Activated CD4-positive, alpha-beta T cell treated with anti-CD3 and anti-CD28 coated beads for 36 hours (primary cell): ENCODE measurements at regions of chr3 and their contacts with region 1.

Region 1: GRCh38 chr3:152471814-152472671 is 203.3 kb downstream of the MBNL1 start:
- DNase-seq: peak; percentile 83
- ATAC-seq: peak; percentile 80
- H3K4me3 Mint-ChIP-seq: peak overlapping the region; percentile 39
- H3K27ac Mint-ChIP-seq: peak overlapping the region; percentile 55
- H3K4me1 Mint-ChIP-seq: peaks cover 10% of the 10 kb centered on the region
- H3K27me3 Mint-ChIP-seq: no peaks in the 10 kb centered on the region

Region 2: DNA sequence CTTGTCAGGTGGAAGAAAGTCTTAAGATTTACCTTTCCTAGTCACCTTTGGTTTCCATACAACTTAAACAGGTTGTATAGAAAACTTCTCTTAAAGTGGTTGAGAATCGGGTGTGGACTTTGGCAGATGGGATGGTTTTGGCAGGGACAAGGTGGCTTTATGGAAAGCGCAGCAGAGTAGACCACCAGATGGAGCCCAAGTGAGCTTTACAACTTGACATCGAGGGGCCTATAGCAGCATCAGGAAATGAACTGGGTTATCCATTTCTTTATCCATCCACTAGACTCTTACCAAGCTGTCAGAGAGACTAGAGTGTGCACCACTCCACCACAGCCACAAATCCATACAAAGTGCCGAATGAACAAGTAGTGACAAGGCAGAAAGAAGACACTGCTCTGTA is 288.6 kb before region 1 on chr3:
- CTCF ChIA-PET with region 1: interaction called, 15 read pairs
- POLR2A ChIA-PET with region 1: interaction called, 3 read pairs
- intact Hi-C with region 1: loop called (anchors 1 to 2 kb)
- DNase-seq: peak; percentile 72
- ATAC-seq: peak; percentile 87
- H3K4me3 Mint-ChIP-seq: peak overlapping the region; percentile 6
- H3K27ac Mint-ChIP-seq: peak overlapping the region; percentile 71
- H3K4me1 Mint-ChIP-seq: peaks cover 67% of the 10 kb centered on the region
- H3K27me3 Mint-ChIP-seq: no peaks in the 10 kb centered on the region

Region 3: GRCh38 chr3:152505926-152506325 is 33.9 kb after region 1 on chr3:
- CTCF ChIA-PET with region 1: interaction called, 10 read pairs
- POLR2A ChIA-PET with region 1: no interaction called
- intact Hi-C with region 1: no loop called
- DNase-seq: peak; percentile 62
- ATAC-seq: peak; percentile 96
- H3K4me3 Mint-ChIP-seq: no peak overlapping the region
- H3K27ac Mint-ChIP-seq: peak overlapping the region; percentile 11
- H3K4me1 Mint-ChIP-seq: peaks cover 6% of the 10 kb centered on the region
- H3K27me3 Mint-ChIP-seq: no peaks in the 10 kb centered on the region

Region 4: DNA sequence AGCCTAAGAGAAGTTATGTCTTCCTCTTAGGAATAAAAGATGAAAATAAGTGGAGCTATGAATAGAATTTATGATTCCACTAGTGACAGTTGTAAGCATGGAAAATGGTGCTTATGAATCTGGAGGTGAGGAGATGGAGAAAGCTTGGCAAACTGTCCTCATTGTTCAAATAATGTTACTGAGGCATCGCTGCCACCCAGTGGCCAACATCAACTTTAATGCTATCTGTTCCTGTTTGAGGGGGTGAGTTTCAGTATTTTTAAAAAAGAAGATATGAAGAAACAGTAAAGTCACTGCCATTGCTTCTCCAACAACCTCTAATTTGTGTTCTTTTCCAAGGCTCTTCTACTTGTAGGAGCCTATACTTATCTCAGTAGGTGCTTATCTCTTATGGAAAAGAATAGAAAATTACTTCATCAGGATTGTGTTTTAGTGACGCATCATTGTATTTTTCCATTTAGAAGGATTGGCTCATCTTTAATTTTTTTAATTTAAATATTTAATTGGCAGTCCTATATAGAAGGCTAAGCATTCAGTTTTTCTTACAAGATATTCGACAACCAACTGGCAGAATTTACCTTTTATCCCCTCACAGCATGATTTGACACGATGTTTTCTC is 102.5 kb after region 1 on chr3:
- CTCF ChIA-PET with region 1: interaction called, 15 read pairs
- POLR2A ChIA-PET with region 1: no interaction called
- intact Hi-C with region 1: loop called (anchors 1 to 5 kb)
- DNase-seq: peak; percentile 65
- ATAC-seq: no peak
- H3K4me3 Mint-ChIP-seq: no peak overlapping the region
- H3K27ac Mint-ChIP-seq: no peak overlapping the region
- H3K4me1 Mint-ChIP-seq: no peaks in the 10 kb centered on the region
- H3K27me3 Mint-ChIP-seq: peaks cover 3% of the 10 kb centered on the region